Heart right ventricle (tissue), 16 donors: ENCODE measurements at regions of chr14 and their contacts with region 1.

Region 1: GRCh38 chr14:84323978-84324377 is 1206.0 kb upstream of the FLRT2 start:
- DNase-seq: no peak
- ATAC-seq: peak in 6 of 8 donors; percentile 65 to 97 (median 88)
- H3K4me3 ChIP-seq: no peak overlapping the region
- H3K27ac ChIP-seq: peak overlapping the region in 8 of 10 donors; percentile 8 to 66 (median 50)
- H3K4me1 ChIP-seq: peaks cover 0 to 16% (median 0%) of the 10 kb centered on the region in 9 donors
- H3K27me3 ChIP-seq: no peaks in the 10 kb centered on the region
- CTCF ChIP-seq: no peak

Region 2: GRCh38 chr14:84254290-84254689 is 69.7 kb before region 1 on chr14:
- intact Hi-C with region 1: loop called in 1 of 10 experiments (anchors 5 kb)
- DNase-seq: peak in 1 of 2 donors; percentile 47
- ATAC-seq: peak; percentile 71 to 97 (median 90)
- H3K4me3 ChIP-seq: peak overlapping the region in 3 of 10 donors; percentile 3 to 11 (median 9)
- H3K27ac ChIP-seq: peak overlapping the region in 1 of 10 donors; percentile 55
- H3K4me1 ChIP-seq: peaks cover 0 to 56% (median 17%) of the 10 kb centered on the region in 9 donors
- H3K27me3 ChIP-seq: no peaks in the 10 kb centered on the region
- CTCF ChIP-seq: no peak